ENCODE measurements at regions of chr18 and their contacts with region 1.

Region 1: DNA sequence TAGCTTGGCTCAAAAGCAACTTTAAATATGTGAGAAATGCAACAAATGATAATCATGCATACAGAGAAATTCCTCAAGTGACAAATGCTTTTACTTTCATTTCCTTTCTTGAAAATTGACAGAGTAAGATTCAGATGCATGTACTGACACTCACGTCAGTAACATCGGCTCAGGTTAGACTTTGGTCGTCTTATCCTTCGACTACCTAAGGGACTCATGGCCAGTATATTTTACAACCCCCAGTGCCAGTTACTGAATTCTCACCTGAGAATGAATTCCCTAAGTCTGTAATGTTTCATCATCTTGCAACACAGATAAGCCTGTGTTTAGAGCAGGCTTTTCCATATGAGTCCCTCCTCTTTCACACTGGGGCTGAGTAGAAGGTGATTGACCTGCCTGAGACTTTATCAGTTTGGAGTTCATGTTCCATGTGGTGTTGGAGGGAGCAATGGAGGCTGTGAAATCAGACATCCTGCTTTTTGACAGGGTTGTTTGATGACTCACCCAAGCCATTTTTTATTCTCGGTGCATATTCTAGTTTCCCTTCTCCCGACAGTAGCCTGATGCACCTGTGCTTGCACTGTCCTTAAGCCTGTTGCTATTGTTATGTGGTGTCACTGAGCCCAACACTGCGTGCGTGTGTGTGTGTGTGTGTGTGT is 30.5 kb upstream of the ATP8B1 start:
- DNase-seq: peak; percentile 66
- H3K4me3 Mint-ChIP-seq: peak overlapping the region; percentile 49
- H3K27ac Mint-ChIP-seq: peak overlapping the region; percentile 81
- H3K4me1 Mint-ChIP-seq: peaks cover 36% of the 10 kb centered on the region
- H3K27me3 Mint-ChIP-seq: peaks cover 15% of the 10 kb centered on the region

Region 2: DNA sequence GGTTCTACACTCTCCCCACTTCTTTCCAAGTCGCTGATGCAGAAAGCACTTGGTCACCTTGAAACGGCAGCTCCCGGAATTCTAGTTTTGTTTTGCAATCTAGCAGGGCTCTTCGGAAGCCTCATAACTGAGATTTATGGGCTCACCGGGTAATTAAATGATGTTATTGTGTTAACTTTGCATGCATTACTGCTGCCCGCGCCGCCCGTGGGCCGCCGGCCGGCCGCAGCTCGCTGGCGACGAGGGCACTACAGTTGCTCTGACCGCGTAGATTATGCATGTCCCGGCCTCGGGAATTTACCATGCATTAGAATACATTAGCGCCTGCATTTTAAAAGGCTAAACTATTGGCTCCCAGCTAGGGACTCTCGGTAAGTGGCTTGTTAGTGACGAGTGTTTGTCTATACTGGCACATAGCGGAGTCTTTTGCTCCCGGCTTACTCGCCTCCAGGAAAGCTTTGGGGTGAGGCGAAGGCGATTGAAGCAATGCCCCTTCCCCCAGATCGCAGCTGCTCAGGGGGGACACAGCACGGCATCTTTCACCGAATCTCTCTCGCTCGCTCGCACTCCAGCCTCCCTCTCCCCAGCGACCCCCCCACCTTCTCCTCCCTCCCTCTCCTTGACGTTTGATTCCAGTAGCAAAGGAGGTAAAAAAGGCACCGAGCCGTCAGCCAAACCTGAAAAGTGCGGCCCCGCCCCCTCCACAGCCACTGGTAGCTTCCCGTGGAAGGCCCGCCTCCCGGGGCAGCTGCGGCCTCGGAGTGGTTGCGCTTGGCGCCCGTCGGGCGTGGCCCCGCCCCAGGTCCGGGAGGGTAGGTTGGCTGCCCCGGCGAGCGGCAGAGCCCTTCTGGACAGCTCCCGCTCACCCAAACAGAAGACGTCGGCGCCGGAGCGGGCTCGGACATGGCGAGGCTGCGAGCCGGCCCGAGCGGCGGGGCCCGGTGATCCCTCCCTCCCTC is 398.8 kb before region 1 on chr18 and contains the start of gene ONECUT2:
- CTCF ChIA-PET with region 1: no interaction called
- intact Hi-C with region 1: loop called (anchors 5 kb)
- DNase-seq: peak; percentile 77
- H3K4me3 Mint-ChIP-seq: peak within 1 kb of the TSS; percentile 51
- H3K27ac Mint-ChIP-seq: no peak within 1 kb of the TSS
- H3K4me1 Mint-ChIP-seq: peaks cover 53% of the 10 kb centered on the region
- H3K27me3 Mint-ChIP-seq: peaks cover 88% of the 10 kb centered on the region
- total RNA-seq, gene ONECUT2: not detected

Region 3: DNA sequence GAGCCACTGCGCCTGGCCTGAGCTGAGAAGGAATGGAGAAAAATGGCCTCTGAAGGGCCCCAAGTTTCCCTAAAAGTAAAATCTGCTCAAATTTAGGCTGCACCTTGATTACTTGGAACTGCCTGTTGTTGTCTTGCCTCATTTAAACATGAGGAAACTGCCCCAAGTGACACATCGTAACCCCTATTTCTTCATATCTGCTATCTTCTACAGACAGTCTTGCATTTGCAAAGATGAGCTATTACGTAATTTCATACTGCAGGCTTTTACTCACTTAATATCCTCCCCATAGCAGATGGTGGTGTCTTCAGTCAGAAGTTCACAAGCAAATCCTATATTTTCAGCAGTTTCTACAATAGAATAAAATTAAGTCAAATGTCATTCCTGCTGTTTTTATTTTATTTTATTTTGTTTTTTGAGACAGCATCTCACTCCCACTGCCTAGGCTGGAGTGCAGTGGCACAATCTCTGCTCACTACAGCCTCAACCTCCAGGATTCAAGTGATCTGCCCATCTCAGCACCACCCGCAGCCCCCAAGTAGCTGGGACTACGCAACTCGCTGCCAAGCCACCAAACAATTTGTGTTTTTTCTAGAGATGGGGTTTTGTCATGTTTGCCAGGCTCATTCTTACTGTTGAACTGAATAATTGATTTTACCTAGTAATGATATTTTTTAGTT is 166.6 kb before region 1 on chr18:
- CTCF ChIA-PET with region 1: no interaction called
- intact Hi-C with region 1: loop called (anchors 5 kb)
- DNase-seq: no peak
- H3K4me3 Mint-ChIP-seq: no peak overlapping the region
- H3K27ac Mint-ChIP-seq: no peak overlapping the region
- H3K4me1 Mint-ChIP-seq: peaks cover 38% of the 10 kb centered on the region
- H3K27me3 Mint-ChIP-seq: no peaks in the 10 kb centered on the region

Region 4: GRCh38 chr18:58303363-58303762 is 469.8 kb after region 1 on chr18:
- CTCF ChIA-PET with region 1: no interaction called
- intact Hi-C with region 1: loop called (anchors 5 kb)
- DNase-seq: peak; percentile 75
- H3K4me3 Mint-ChIP-seq: no peak overlapping the region
- H3K27ac Mint-ChIP-seq: peak overlapping the region; percentile 40
- H3K4me1 Mint-ChIP-seq: peaks cover 38% of the 10 kb centered on the region
- H3K27me3 Mint-ChIP-seq: peaks cover 2% of the 10 kb centered on the region

Region 5: DNA sequence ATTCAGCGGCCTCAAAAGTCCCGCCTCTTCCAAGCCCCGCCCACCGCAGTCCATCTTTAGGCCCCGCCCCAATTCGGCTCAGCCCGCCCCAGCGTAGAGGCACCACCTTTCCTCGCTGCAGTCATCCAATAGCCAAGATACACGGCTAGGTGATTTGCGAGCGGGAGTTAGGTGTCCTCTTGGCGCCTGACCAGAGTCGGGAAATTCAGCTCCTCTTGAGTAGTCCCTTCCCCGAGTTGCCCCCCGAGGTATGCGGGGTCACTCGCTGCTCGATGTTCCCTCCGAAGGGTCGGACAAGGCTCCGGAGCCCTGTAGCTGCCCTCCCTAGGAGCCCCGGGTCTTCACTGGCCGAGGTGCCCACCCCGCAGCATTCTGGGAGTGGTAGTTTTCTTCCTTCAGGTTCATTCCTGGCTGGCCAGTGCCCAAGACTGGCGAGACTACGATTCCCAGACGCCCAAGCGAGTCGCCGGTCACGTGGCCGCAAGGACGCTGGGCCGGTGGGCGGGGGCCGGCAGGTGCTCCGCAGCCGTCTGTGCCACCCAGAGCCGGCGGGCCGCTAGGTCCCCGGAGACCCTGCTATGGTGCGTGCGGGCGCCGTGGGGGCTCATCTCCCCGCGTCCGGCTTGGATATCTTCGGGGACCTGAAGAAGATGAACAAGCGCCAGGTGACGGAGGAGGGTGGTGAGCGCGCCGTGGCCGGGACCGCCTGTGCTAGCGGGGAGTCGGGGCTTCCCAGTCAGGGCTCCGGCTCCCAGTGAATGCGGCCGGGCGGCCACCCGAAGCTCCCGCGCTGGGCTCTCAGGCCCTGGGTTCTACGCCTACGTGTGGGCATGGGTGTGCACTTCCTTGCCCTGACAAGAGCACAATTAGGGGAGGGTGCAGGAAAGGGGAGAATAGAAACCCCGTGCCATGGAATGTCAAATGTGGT is 1306.1 kb after region 1 on chr18 and contains the start of gene SEC11C:
- CTCF ChIA-PET with region 1: no interaction called
- intact Hi-C with region 1: loop called (anchors 5 kb)
- DNase-seq: peak; percentile 97
- H3K4me3 Mint-ChIP-seq: peak within 1 kb of the TSS; percentile 90
- H3K27ac Mint-ChIP-seq: peak within 1 kb of the TSS; percentile 97
- H3K4me1 Mint-ChIP-seq: peaks cover 43% of the 10 kb centered on the region
- H3K27me3 Mint-ChIP-seq: peaks cover 3% of the 10 kb centered on the region
- total RNA-seq, gene SEC11C: 45.0 to 46.7 TPM